ENCODE measurements at regions of chr19 and their contacts with region 1.

Region 1: DNA sequence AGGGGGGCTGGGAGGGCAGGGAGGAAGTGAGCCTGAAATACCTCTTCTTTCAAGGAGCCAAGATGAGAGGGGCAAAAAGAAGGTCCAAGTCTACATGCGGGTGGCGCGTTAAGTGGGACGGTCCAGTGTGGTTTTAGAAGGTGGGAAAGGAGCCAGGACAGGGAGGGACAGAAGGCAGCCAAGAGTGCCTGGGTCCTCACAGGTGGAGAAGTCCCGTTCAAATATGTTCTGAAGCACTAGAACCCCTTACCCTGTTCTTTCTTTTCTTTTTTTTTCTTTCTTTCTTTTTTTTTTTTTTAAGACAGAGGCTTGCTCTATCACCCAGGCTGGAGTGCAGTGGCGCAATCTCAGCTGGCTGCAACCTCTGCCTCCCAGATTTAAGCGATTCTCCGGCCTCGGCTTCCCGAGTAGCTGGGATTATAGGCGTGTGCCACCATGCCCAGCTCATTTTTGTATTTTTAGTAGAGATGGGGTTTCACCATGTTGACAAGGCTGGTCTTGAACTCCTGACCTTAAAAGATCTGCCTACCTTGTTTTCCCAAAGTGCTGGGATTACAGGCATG is 7.4 kb downstream of the CAMSAP3 start:
- DNase-seq: no peak
- ATAC-seq: no peak
- H3K4me3 ChIP-seq: no peak overlapping the region
- H3K4me3 Mint-ChIP-seq: no peak overlapping the region
- H3K27ac ChIP-seq: no peak overlapping the region
- H3K27ac Mint-ChIP-seq: no peak overlapping the region
- H3K4me1 ChIP-seq: peaks cover 5 to 7% of the 10 kb centered on the region in 2 experiments
- H3K4me1 Mint-ChIP-seq: peaks cover 0 to 11% (median 0%) of the 10 kb centered on the region in 3 donors
- H3K27me3 ChIP-seq: peaks cover 2 to 54% of the 10 kb centered on the region in 2 experiments
- H3K27me3 Mint-ChIP-seq: peaks cover 27 to 28% of the 10 kb centered on the region in 2 donors

Region 2: DNA sequence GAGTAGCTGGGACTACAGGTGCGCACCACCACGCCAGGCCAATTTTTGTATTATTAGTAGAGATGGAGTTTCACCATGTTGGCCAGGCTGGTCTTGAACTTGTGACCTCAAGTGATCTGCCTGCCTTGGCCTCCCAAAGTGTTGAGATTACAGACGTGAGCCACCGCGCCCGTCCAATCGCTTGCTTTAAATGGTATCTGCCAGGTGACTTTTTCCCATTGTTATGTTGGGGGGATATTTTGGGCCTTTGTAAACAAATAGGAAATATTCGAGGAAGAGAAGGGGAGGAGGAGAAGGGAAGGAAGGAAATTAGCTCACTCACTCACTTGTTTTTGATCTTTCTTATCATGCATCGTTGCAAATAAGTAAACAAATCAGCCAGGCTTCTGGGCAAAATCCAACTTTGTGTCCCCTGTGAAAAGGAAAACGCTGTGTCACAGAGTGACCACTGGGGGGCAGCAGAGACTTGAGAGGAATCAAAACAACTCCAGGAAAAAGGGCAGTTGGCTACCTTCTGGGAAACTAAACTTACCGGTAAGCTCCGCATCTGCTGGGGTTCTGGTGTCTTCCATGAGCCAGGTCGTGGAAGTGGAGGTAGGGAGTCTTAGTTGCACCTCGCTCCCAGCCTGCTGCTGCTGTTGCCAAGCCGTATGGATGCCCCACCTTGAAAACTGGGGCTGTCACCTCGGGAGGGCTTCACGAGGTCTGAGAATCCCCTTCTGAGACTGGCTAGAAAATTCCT is 1615.8 kb before region 1 on chr19:
- CTCF ChIA-PET with region 1: no interaction called
- POLR2A ChIA-PET with region 1: interaction called in 1 of 2 experiments, 10 read pairs
- DNase-seq: peak; percentile 20 to 84 (median 61)
- ATAC-seq: peak; percentile 63 to 70 (median 67)
- H3K4me3 ChIP-seq: peak overlapping the region; percentile 35 to 42
- H3K4me3 Mint-ChIP-seq: peak overlapping the region; percentile 74 to 76 (median 76)
- H3K27ac ChIP-seq: no peak overlapping the region
- H3K27ac Mint-ChIP-seq: peak overlapping the region; percentile 20 to 68
- H3K4me1 ChIP-seq: peaks cover 4 to 29% of the 10 kb centered on the region in 2 experiments
- H3K4me1 Mint-ChIP-seq: peaks cover 22 to 33% (median 24%) of the 10 kb centered on the region in 3 donors
- H3K27me3 ChIP-seq: peaks cover 0 to 8% of the 10 kb centered on the region in 2 experiments
- H3K27me3 Mint-ChIP-seq: no peaks in the 10 kb centered on the region

Region 3: GRCh38 chr19:7575434-7576040 is 27.5 kb before region 1 on chr19:
- CTCF ChIA-PET with region 1: interaction called in 1 of 2 experiments, 10 read pairs
- POLR2A ChIA-PET with region 1: no interaction called
- DNase-seq: no peak
- ATAC-seq: no peak
- H3K4me3 ChIP-seq: no peak overlapping the region
- H3K4me3 Mint-ChIP-seq: no peak overlapping the region
- H3K27ac ChIP-seq: no peak overlapping the region
- H3K27ac Mint-ChIP-seq: no peak overlapping the region
- H3K4me1 ChIP-seq: no peaks in the 10 kb centered on the region
- H3K4me1 Mint-ChIP-seq: no peaks in the 10 kb centered on the region
- H3K27me3 ChIP-seq: peaks cover 0 to 7% of the 10 kb centered on the region in 2 experiments
- H3K27me3 Mint-ChIP-seq: peaks cover 5 to 13% of the 10 kb centered on the region in 2 donors